CD4-positive, alpha-beta memory T cell (primary cell): ENCODE measurements at regions of chr14 and their contacts with region 1.

Region 1: DNA sequence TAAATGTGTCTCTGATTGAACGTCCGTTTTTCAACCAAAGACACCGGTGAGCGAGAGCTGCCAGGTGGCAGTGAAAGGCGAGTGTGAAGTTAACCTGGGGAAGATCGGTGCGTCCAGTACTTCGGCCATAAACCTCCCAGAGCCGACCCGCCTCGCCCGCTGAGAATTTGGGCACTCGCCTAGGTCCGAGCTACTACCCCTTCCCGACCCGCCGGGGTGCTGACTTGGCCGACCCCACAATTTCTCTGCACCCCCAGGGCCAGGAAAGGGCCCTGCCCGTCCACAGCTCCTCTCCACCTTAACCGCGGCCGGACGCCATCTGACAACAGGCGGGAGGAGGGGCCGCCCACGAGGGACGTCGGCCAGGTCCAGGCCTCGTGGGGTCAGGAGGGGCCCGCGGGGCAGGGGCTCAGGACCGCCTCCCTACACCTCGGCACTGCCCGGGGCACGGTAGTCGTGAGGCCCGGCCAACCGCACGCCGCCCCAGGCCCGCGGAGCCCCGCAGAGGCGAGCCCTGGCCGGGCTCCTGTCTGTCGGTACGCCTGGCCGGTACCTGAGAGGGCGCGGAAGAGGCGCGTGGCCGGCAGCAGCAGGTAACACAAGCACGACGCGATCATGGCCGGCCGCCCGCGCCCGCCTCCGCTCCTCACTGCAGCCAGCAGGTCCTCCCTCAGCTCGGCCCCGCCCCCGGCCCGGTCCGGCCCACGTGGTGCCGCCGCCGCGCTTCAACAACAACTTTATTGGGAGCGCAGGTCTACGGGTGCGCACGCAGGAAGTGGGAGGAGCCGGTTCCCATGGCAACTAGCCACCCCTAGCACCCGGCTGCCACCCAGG is at the start of gene ANGEL1:
- DNase-seq: peak; percentile 94 to 97 (median 96)
- H3K4me3 ChIP-seq: peak within 1 kb of the TSS; percentile 43 to 78
- H3K4me3 Mint-ChIP-seq: peak within 1 kb of the TSS; percentile 87 to 98 (median 94)
- H3K27ac ChIP-seq: peak within 1 kb of the TSS; percentile 76
- H3K27ac Mint-ChIP-seq: peak within 1 kb of the TSS; percentile 93 to 98 (median 95)
- H3K4me1 ChIP-seq: peaks cover 24% of the 10 kb centered on the region
- H3K4me1 Mint-ChIP-seq: peaks cover 21 to 37% (median 28%) of the 10 kb centered on the region in 4 donors
- H3K27me3 ChIP-seq: no peaks in the 10 kb centered on the region
- H3K27me3 Mint-ChIP-seq: peaks cover 0 to 2% of the 10 kb centered on the region in 2 donors
- total RNA-seq, gene ANGEL1: 26.1 to 28.0 TPM

Region 2: GRCh38 chr14:76151398-76152339 is 660.8 kb before region 1 on chr14 and contains the start of gene GPATCH2L:
- CTCF ChIA-PET with region 1: no interaction called
- POLR2A ChIA-PET with region 1: no interaction called
- intact Hi-C with region 1: loop called (anchors 5 kb)
- DNase-seq: peak; percentile 94 to 97 (median 96)
- H3K4me3 ChIP-seq: peak within 1 kb of the TSS; percentile 85 to 88
- H3K4me3 Mint-ChIP-seq: peak within 1 kb of the TSS; percentile 92 to 99 (median 96)
- H3K27ac ChIP-seq: peak within 1 kb of the TSS; percentile 94
- H3K27ac Mint-ChIP-seq: peak within 1 kb of the TSS; percentile 93 to 99 (median 97)
- H3K4me1 ChIP-seq: peaks cover 51% of the 10 kb centered on the region
- H3K4me1 Mint-ChIP-seq: peaks cover 37 to 59% (median 49%) of the 10 kb centered on the region in 4 donors
- H3K27me3 ChIP-seq: no peaks in the 10 kb centered on the region
- H3K27me3 Mint-ChIP-seq: no peaks in the 10 kb centered on the region
- total RNA-seq, gene GPATCH2L: 66.0 to 70.1 TPM

Region 3: GRCh38 chr14:76761136-76761959 is 51.1 kb before region 1 on chr14 and contains the start of gene VASH1:
- CTCF ChIA-PET with region 1: interaction called, 4 read pairs
- POLR2A ChIA-PET with region 1: interaction called, 9 read pairs
- intact Hi-C with region 1: loop called (anchors 2 kb)
- DNase-seq: peak; percentile 14 to 67 (median 57)
- H3K4me3 ChIP-seq: peak within 1 kb of the TSS; percentile 29 to 69
- H3K4me3 Mint-ChIP-seq: peak within 1 kb of the TSS; percentile 78 to 92 (median 86)
- H3K27ac ChIP-seq: no peak within 1 kb of the TSS
- H3K27ac Mint-ChIP-seq: peak within 1 kb of the TSS in 5 of 7 donors; percentile 82 to 94 (median 86)
- H3K4me1 ChIP-seq: peaks cover 22% of the 10 kb centered on the region
- H3K4me1 Mint-ChIP-seq: peaks cover 4 to 48% (median 15%) of the 10 kb centered on the region in 4 donors
- H3K27me3 ChIP-seq: no peaks in the 10 kb centered on the region
- H3K27me3 Mint-ChIP-seq: peaks cover 13 to 18% of the 10 kb centered on the region in 2 donors
- total RNA-seq, gene VASH1: 9.3 to 12.6 TPM

Region 4: GRCh38 chr14:76876076-76876475 is 63.6 kb after region 1 on chr14:
- CTCF ChIA-PET with region 1: no interaction called
- POLR2A ChIA-PET with region 1: no interaction called
- intact Hi-C with region 1: no loop called
- DNase-seq: peak in 4 of 5 donors; percentile 41 to 50 (median 44)
- H3K4me3 ChIP-seq: no peak overlapping the region
- H3K4me3 Mint-ChIP-seq: no peak overlapping the region
- H3K27ac ChIP-seq: no peak overlapping the region
- H3K27ac Mint-ChIP-seq: peak overlapping the region in 2 of 7 donors; percentile 10 to 31
- H3K4me1 ChIP-seq: no peaks in the 10 kb centered on the region
- H3K4me1 Mint-ChIP-seq: no peaks in the 10 kb centered on the region
- H3K27me3 ChIP-seq: no peaks in the 10 kb centered on the region
- H3K27me3 Mint-ChIP-seq: peaks cover 0 to 3% of the 10 kb centered on the region in 2 donors

Region 5: GRCh38 chr14:76956316-76957090 is 144.1 kb after region 1 on chr14:
- CTCF ChIA-PET with region 1: no interaction called
- POLR2A ChIA-PET with region 1: no interaction called
- intact Hi-C with region 1: loop called (anchors 1 kb)
- DNase-seq: peak; percentile 83 to 97 (median 85)
- H3K4me3 ChIP-seq: peak overlapping the region; percentile 61 to 64
- H3K4me3 Mint-ChIP-seq: peak overlapping the region; percentile 81 to 96 (median 88)
- H3K27ac ChIP-seq: peak overlapping the region; percentile 94
- H3K27ac Mint-ChIP-seq: peak overlapping the region; percentile 87 to 99 (median 98)
- H3K4me1 ChIP-seq: peaks cover 72% of the 10 kb centered on the region
- H3K4me1 Mint-ChIP-seq: peaks cover 37 to 75% (median 53%) of the 10 kb centered on the region in 4 donors
- H3K27me3 ChIP-seq: no peaks in the 10 kb centered on the region
- H3K27me3 Mint-ChIP-seq: no peaks in the 10 kb centered on the region

Region 6: GRCh38 chr14:77376771-77377501 is 564.5 kb after region 1 on chr14 and contains the starts of genes SAMD15 and TMED8:
- CTCF ChIA-PET with region 1: no interaction called
- POLR2A ChIA-PET with region 1: no interaction called
- intact Hi-C with region 1: loop called (anchors 5 kb)
- DNase-seq: peak; percentile 81 to 87 (median 87)
- H3K4me3 ChIP-seq: peak within 1 kb of the TSS; percentile 94 to 97
- H3K4me3 Mint-ChIP-seq: peak within 1 kb of the TSS; percentile 85 to 94 (median 90)
- H3K27ac ChIP-seq: peak within 1 kb of the TSS; percentile 74
- H3K27ac Mint-ChIP-seq: peak within 1 kb of the TSS in 6 of 7 donors; percentile 84 to 95 (median 92)
- H3K4me1 ChIP-seq: peaks cover 46% of the 10 kb centered on the region
- H3K4me1 Mint-ChIP-seq: peaks cover 30 to 42% (median 36%) of the 10 kb centered on the region in 4 donors
- H3K27me3 ChIP-seq: no peaks in the 10 kb centered on the region
- H3K27me3 Mint-ChIP-seq: no peaks in the 10 kb centered on the region
- total RNA-seq, gene SAMD15: 0.11 to 0.38 TPM
- total RNA-seq, gene TMED8: 8.3 to 8.6 TPM